ENCODE measurements at regions of chr20 and their contacts with region 1.

Region 1: GRCh38 chr20:40990542-40991120 is 38.0 kb upstream of the TOP1 start:
- DNase-seq: peak; percentile 86
- ATAC-seq: peak; percentile 93
- H3K4me3 Mint-ChIP-seq: no peak overlapping the region
- H3K27ac Mint-ChIP-seq: peak overlapping the region; percentile 85
- H3K4me1 Mint-ChIP-seq: peaks cover 28% of the 10 kb centered on the region
- H3K27me3 Mint-ChIP-seq: no peaks in the 10 kb centered on the region
- CTCF ChIP-seq: peak; percentile 87

Region 2: DNA sequence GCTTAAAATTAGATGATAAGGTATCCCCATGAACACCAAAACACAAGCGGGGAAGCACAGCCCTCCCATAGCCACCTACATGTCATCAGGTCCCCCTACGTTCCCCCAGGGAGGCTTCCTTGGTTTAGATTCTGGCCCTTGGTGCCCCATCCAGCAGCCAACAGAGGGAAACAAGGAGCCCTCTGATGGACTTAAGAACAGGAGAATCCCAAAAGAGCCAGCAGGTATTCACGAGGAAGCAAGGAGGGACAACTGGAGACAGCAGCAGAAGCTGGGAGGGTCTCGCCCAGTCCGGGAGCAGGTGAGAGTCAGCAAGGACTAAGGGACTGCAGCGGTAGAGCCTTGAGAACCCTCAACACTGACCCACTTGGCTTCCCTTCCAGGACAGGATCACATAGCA is 20.4 kb before region 1 on chr20:
- CTCF ChIA-PET with region 1: interaction called, 59 read pairs
- POLR2A ChIA-PET with region 1: no interaction called
- intact Hi-C with region 1: no loop called
- DNase-seq: no peak
- ATAC-seq: no peak
- H3K4me3 Mint-ChIP-seq: no peak overlapping the region
- H3K27ac Mint-ChIP-seq: no peak overlapping the region
- H3K4me1 Mint-ChIP-seq: peaks cover 11% of the 10 kb centered on the region
- H3K27me3 Mint-ChIP-seq: peaks cover 8% of the 10 kb centered on the region
- CTCF ChIP-seq: no peak

Region 3: DNA sequence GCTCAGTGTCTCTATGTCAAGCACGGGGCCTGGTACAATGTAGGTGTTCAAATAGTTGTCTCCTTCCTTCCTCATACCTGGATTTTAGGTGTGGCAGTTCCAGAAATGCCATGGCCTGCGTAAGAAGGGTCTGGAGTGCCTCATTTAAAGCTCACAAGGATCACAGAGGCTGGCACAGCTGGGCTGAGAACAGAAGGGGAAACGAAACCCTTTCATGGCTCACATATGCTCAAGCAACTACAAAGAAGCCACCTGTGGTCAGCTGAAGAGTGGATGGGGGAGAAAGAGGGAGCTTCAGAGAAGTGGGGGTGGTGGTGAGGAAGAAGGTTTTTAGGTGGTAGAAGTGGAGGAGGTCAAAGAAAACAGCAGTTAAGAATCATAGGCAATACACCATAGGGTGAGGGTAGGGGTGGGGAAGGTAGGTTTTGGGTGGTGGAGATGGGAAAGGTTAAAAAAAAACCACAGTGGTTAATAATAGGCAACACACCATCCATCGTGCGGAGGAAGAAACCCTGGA is 21.0 kb after region 1 on chr20:
- CTCF ChIA-PET with region 1: interaction called, 27 read pairs
- POLR2A ChIA-PET with region 1: interaction called, 4 read pairs
- intact Hi-C with region 1: no loop called
- DNase-seq: peak; percentile 69
- ATAC-seq: peak; percentile 86
- H3K4me3 Mint-ChIP-seq: no peak overlapping the region
- H3K27ac Mint-ChIP-seq: peak overlapping the region; percentile 55
- H3K4me1 Mint-ChIP-seq: peaks cover 34% of the 10 kb centered on the region
- H3K27me3 Mint-ChIP-seq: no peaks in the 10 kb centered on the region
- CTCF ChIP-seq: no peak

Region 4: DNA sequence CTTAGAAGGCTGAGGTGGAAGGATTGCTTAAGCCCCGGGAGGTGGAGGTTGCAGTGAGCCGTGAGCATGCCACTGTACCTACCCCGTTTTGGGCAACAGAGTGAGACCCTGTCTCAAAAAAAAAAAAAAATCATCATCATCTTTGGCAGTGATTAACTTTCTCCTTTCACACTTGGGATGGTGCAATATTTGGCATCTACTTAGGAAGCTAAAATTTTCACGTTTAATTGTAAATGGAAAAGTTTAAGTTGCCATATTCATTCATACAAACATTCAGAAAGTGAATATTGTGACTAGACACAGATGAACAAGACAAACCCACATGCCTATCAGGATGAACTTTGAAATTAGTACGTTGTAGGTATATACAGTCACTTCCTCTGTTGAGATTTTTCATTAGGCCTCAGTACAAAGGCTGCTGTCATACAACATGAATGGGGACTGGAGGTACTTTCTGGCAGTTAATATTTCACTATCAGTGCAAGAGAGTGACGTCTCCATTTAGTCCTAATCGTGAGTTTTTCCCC is 48.3 kb after region 1 on chr20:
- CTCF ChIA-PET with region 1: interaction called, 30 read pairs
- POLR2A ChIA-PET with region 1: no interaction called
- intact Hi-C with region 1: no loop called
- DNase-seq: no peak
- ATAC-seq: peak; percentile 80
- H3K4me3 Mint-ChIP-seq: no peak overlapping the region
- H3K27ac Mint-ChIP-seq: peak overlapping the region; percentile 74
- H3K4me1 Mint-ChIP-seq: peaks cover 83% of the 10 kb centered on the region
- H3K27me3 Mint-ChIP-seq: no peaks in the 10 kb centered on the region
- CTCF ChIP-seq: no peak

Region 5: GRCh38 chr20:41072190-41072863 is 81.7 kb after region 1 on chr20:
- CTCF ChIA-PET with region 1: interaction called, 32 read pairs
- POLR2A ChIA-PET with region 1: interaction called, 4 read pairs
- intact Hi-C with region 1: no loop called
- DNase-seq: no peak
- ATAC-seq: peak; percentile 27
- H3K4me3 Mint-ChIP-seq: no peak overlapping the region
- H3K27ac Mint-ChIP-seq: peak overlapping the region; percentile 55
- H3K4me1 Mint-ChIP-seq: peaks cover 68% of the 10 kb centered on the region
- H3K27me3 Mint-ChIP-seq: no peaks in the 10 kb centered on the region
- CTCF ChIP-seq: no peak

Region 6: GRCh38 chr20:41095110-41095969 is 104.7 kb after region 1 on chr20:
- CTCF ChIA-PET with region 1: interaction called, 304 read pairs
- POLR2A ChIA-PET with region 1: interaction called, 3 read pairs
- intact Hi-C with region 1: loop called (anchors 5 kb)
- DNase-seq: peak; percentile 70
- ATAC-seq: peak; percentile 73
- H3K4me3 Mint-ChIP-seq: no peak overlapping the region
- H3K27ac Mint-ChIP-seq: no peak overlapping the region
- H3K4me1 Mint-ChIP-seq: peaks cover 2% of the 10 kb centered on the region
- H3K27me3 Mint-ChIP-seq: no peaks in the 10 kb centered on the region
- CTCF ChIP-seq: peak; percentile 97

Measured in activated CD8-positive, alpha-beta T cell treated with anti-CD3 and anti-CD28 coated beads for 36 hours (primary cell).